Caco-2 (cell line): ENCODE measurements at regions of chr1 and their contacts with region 1.

Region 1: DNA sequence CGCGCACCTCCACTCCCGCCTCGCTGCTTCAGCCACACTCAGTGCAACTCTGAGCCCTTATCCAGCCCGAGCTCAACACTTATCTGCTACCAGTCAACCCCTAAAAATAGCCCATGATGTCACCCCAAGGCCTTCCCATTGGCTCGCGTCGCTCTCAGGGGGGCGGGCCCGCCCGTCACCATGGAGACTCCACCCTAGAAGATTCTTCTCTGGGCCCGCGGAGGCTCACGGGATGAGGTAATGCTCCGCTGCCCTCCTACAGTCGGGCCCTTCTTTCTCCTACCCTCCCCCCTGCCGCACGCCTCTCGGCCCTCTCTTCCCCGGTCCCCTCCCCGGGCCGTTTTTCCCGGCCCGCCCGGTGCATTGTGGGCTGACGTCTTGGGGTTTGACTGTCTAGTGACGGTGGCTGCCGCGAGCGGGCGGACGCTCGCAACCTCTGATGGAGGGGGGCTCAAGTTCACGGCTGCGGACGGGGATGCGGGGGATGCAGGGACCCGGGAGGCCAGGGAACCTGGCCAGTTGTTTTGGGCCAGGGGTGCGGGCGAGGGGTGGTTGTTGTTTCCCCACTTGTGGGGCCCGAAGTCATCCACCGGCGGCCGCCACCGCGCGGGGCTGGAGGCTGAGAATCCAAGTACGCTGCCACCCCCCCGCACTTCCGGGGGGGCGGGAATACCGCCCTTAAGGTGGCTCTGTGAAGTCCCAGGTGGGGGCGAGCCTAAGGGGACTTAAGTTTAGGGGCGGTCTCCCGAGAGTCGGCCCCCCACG is at the start of gene JUN:
- DNase-seq: peak; percentile 95 to 97
- H3K4me3 ChIP-seq: peak within 1 kb of the TSS; percentile 70
- H3K4me3 Mint-ChIP-seq: peak within 1 kb of the TSS; percentile 83
- H3K27ac Mint-ChIP-seq: peak within 1 kb of the TSS; percentile 94
- H3K4me1 ChIP-seq: peaks cover 7% of the 10 kb centered on the region; the same call in 1 of the 2 replicates
- H3K4me1 Mint-ChIP-seq: peaks cover 8% of the 10 kb centered on the region
- H3K27me3 ChIP-seq: no peaks in the 10 kb centered on the region
- H3K27me3 Mint-ChIP-seq: no peaks in the 10 kb centered on the region
- CTCF ChIP-seq: no peak
- total RNA-seq, gene JUN: 25.7 and 28.2 TPM in 2 replicates

Region 2: GRCh38 chr1:58561633-58562032 is 222.5 kb before region 1 on chr1:
- CTCF ChIA-PET with region 1: no interaction called
- POLR2A ChIA-PET with region 1: no interaction called
- intact Hi-C with region 1: no loop called
- DNase-seq: no peak
- H3K4me3 ChIP-seq: no peak overlapping the region
- H3K4me3 Mint-ChIP-seq: no peak overlapping the region
- H3K27ac Mint-ChIP-seq: no peak overlapping the region
- H3K4me1 ChIP-seq: no peaks in the 10 kb centered on the region
- H3K4me1 Mint-ChIP-seq: no peaks in the 10 kb centered on the region
- H3K27me3 ChIP-seq: no peaks in the 10 kb centered on the region
- H3K27me3 Mint-ChIP-seq: no peaks in the 10 kb centered on the region
- CTCF ChIP-seq: no peak

Region 3: GRCh38 chr1:58670181-58670580 is 114.0 kb before region 1 on chr1:
- CTCF ChIA-PET with region 1: no interaction called
- POLR2A ChIA-PET with region 1: no interaction called
- intact Hi-C with region 1: no loop called
- DNase-seq: no peak
- H3K4me3 ChIP-seq: no peak overlapping the region
- H3K4me3 Mint-ChIP-seq: no peak overlapping the region
- H3K27ac Mint-ChIP-seq: no peak overlapping the region
- H3K4me1 ChIP-seq: no peaks in the 10 kb centered on the region
- H3K4me1 Mint-ChIP-seq: no peaks in the 10 kb centered on the region
- H3K27me3 ChIP-seq: no peaks in the 10 kb centered on the region
- H3K27me3 Mint-ChIP-seq: no peaks in the 10 kb centered on the region
- CTCF ChIP-seq: no peak

Region 4: DNA sequence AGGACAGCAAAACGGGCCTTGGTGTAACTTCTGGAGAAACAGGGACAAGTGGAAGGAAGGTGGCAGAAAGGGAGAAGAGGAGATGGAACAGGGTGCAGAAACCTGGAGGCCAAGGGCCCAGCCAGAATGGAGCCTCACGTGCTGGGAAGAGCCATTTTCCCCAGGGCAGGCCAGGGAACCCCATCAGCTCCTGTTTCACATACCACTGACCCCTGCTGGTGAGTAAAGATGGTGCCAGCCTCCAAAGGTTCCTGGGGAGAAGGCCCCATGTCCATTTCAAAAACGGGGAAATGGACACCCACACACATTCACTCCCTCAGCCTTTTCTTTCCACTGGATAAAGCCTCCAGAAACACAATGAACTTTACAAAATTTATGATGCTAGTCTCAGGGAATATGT is 57.3 kb after region 1 on chr1:
- CTCF ChIA-PET with region 1: no interaction called
- POLR2A ChIA-PET with region 1: interaction called, 4 read pairs
- intact Hi-C with region 1: loop called (anchors 1 kb)
- DNase-seq: peak in 1 of 2 experiments; percentile 12
- H3K4me3 ChIP-seq: no peak overlapping the region
- H3K4me3 Mint-ChIP-seq: no peak overlapping the region
- H3K27ac Mint-ChIP-seq: no peak overlapping the region
- H3K4me1 ChIP-seq: peaks cover 16% of the 10 kb centered on the region
- H3K4me1 Mint-ChIP-seq: peaks cover 8% of the 10 kb centered on the region
- H3K27me3 ChIP-seq: no peaks in the 10 kb centered on the region
- H3K27me3 Mint-ChIP-seq: no peaks in the 10 kb centered on the region
- CTCF ChIP-seq: no peak

Region 5: GRCh38 chr1:58903514-58904298 is 119.5 kb after region 1 on chr1:
- CTCF ChIA-PET with region 1: no interaction called
- POLR2A ChIA-PET with region 1: no interaction called
- intact Hi-C with region 1: loop called (anchors 1 kb)
- DNase-seq: peak; percentile 82 to 86
- H3K4me3 ChIP-seq: peak overlapping the region; percentile 48
- H3K4me3 Mint-ChIP-seq: peak overlapping the region; percentile 49
- H3K27ac Mint-ChIP-seq: peak overlapping the region; percentile 77
- H3K4me1 ChIP-seq: peaks cover 31% of the 10 kb centered on the region
- H3K4me1 Mint-ChIP-seq: peaks cover 22% of the 10 kb centered on the region
- H3K27me3 ChIP-seq: no peaks in the 10 kb centered on the region
- H3K27me3 Mint-ChIP-seq: no peaks in the 10 kb centered on the region
- CTCF ChIP-seq: no peak

Region 6: DNA sequence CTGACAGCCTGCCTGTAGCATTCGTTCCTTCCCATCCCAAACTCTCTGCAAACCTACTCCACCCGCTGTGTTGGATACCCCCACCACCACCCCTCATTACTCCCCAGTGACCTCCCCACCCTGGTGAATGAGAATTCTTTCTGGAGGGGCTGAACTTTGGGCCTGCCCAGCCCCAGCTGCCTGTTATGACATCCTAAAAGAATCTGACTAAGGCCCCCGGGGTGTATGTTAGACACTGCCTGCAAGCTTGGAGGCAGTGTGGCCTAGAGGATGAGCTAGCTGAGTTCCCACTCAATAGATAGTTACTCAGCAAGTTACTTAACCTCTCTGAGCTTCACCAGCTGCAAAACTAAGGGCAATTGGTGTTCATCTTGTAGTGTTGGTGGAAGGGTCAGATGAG is 402.5 kb after region 1 on chr1:
- CTCF ChIA-PET with region 1: no interaction called
- POLR2A ChIA-PET with region 1: no interaction called
- intact Hi-C with region 1: loop called (anchors 10 kb)
- DNase-seq: peak; percentile 81 to 84
- H3K4me3 ChIP-seq: no peak overlapping the region
- H3K4me3 Mint-ChIP-seq: no peak overlapping the region
- H3K27ac Mint-ChIP-seq: peak overlapping the region; percentile 82
- H3K4me1 ChIP-seq: peaks cover 35% of the 10 kb centered on the region
- H3K4me1 Mint-ChIP-seq: peaks cover 19% of the 10 kb centered on the region
- H3K27me3 ChIP-seq: no peaks in the 10 kb centered on the region
- H3K27me3 Mint-ChIP-seq: no peaks in the 10 kb centered on the region
- CTCF ChIP-seq: no peak

Region 7: DNA sequence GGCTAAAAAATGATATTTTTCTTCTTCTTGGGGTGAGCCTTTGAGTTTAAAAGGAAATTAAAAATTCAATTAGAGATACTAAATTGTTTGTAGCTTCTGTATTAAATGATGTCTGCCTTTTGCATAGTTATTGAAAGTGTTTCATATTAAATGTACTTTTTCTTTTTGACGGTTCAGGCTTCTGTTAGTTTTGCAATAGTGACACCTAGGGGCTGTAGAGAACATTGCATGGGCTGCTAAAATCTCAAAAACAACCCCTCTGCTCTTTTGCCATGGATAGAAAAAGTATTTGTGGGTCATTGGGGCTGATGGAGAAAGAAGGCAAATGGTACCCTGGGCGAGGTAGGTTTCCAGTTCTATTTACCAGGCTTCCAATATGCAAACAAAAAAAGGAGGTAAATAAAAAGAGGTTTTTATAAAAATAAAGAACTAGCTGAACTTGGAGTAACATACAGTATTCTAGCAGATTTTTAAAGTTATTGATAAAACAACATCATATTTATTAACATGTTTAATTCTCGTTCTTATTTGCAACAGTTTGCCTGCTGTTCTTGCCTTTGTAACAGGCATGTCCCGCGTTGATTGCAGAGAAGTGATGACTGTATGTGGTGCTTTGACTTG is 915.2 kb after region 1 on chr1:
- CTCF ChIA-PET with region 1: no interaction called
- POLR2A ChIA-PET with region 1: interaction called, 3 read pairs
- intact Hi-C with region 1: loop called (anchors 2 kb)
- DNase-seq: peak in 1 of 2 experiments; percentile 11
- H3K4me3 ChIP-seq: no peak overlapping the region
- H3K4me3 Mint-ChIP-seq: no peak overlapping the region
- H3K27ac Mint-ChIP-seq: no peak overlapping the region
- H3K4me1 ChIP-seq: no peaks in the 10 kb centered on the region
- H3K4me1 Mint-ChIP-seq: peaks cover 6% of the 10 kb centered on the region
- H3K27me3 ChIP-seq: no peaks in the 10 kb centered on the region
- H3K27me3 Mint-ChIP-seq: no peaks in the 10 kb centered on the region
- CTCF ChIP-seq: peak; percentile 59 to 72